Psoas muscle (tissue), 8 donors: ENCODE measurements at regions of chr16 and their contacts with region 1.

Region 1: DNA sequence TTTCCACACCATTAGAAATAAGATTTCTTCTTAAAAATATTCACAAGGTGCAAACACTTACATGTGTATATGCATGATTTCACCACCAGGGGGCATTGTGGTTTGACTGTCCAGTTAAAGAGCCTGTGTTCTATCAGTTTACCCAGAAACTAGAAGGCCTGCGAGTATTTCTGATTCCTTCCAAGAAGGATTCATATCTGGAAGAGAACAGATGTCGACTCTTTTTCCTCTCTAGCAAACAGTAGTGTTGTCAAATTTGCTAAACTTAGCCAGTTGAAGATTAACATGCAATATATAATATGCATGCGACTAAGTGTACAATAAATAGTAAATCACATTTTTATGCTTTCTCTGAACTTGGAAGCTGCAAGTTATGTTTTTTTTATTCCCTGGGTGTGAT is 404.1 kb downstream of the WWOX start:
- DNase-seq: no peak
- ATAC-seq: peak; percentile 48 to 69 (median 54)
- H3K4me3 ChIP-seq: no peak overlapping the region
- H3K27ac ChIP-seq: no peak overlapping the region
- H3K4me1 ChIP-seq: peaks cover 23% of the 10 kb centered on the region
- H3K27me3 ChIP-seq: no peaks in the 10 kb centered on the region
- CTCF ChIP-seq: peak; percentile 96

Region 2: GRCh38 chr16:77364770-77365169 is 1138.8 kb before region 1 on chr16:
- intact Hi-C with region 1: no loop called
- DNase-seq: no peak
- ATAC-seq: no peak
- H3K4me3 ChIP-seq: no peak overlapping the region
- H3K27ac ChIP-seq: no peak overlapping the region
- H3K4me1 ChIP-seq: no peaks in the 10 kb centered on the region
- H3K27me3 ChIP-seq: no peaks in the 10 kb centered on the region
- CTCF ChIP-seq: no peak

Region 3: GRCh38 chr16:78684040-78684611 is 180.5 kb after region 1 on chr16:
- intact Hi-C with region 1: loop called in 1 of 2 experiments (anchors 2 kb)
- DNase-seq: peak; percentile 84 to 91
- ATAC-seq: peak; percentile 94 to 97 (median 96)
- H3K4me3 ChIP-seq: no peak overlapping the region
- H3K27ac ChIP-seq: peak overlapping the region; percentile 92
- H3K4me1 ChIP-seq: peaks cover 15% of the 10 kb centered on the region
- H3K27me3 ChIP-seq: no peaks in the 10 kb centered on the region
- CTCF ChIP-seq: no peak

Region 4: GRCh38 chr16:78770353-78771091 is 266.9 kb after region 1 on chr16:
- intact Hi-C with region 1: loop called (anchors 2 kb)
- DNase-seq: peak; percentile 77 to 83
- ATAC-seq: peak; percentile 75 to 89 (median 84)
- H3K4me3 ChIP-seq: no peak overlapping the region
- H3K27ac ChIP-seq: no peak overlapping the region
- H3K4me1 ChIP-seq: peaks cover 19% of the 10 kb centered on the region
- H3K27me3 ChIP-seq: no peaks in the 10 kb centered on the region
- CTCF ChIP-seq: peak; percentile 83

Region 5: DNA sequence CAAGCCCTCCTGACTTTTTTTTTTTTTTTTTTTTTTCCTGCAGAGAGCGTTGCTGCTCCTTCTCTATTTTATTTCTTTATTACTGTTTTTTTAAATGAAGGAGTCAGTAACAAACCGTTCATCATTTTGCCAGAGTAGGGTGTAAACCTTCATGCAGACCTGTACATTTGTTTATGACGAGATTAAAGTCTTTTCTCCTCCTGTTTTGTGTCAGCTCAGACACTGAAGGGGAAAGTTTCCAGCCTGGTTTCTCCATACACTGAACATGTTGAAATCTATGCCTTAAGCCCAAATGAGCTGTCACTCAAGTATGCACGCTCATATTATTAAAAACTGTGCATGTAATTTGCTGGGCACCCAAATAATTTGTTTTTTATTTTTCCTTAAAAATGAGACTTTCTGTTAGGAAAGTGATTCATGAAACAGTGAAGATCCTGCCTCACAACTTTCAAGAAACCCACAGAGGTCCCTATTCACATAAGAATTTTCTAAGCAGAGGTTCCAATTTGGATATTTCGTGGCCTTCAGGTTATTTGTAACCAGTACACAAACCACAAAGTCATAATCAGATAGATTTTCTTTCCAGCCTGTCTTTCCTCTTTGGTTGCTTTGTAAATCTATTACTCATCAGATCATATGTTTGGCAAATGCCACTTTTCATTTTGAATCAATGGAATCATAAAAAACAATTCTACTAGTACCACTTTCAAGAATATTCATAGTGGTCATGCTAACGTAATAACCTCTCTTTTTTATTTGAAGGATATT is 396.6 kb after region 1 on chr16:
- intact Hi-C with region 1: loop called in 1 of 2 experiments (anchors 10 kb)
- DNase-seq: no peak
- ATAC-seq: no peak
- H3K4me3 ChIP-seq: no peak overlapping the region
- H3K27ac ChIP-seq: no peak overlapping the region
- H3K4me1 ChIP-seq: no peaks in the 10 kb centered on the region
- H3K27me3 ChIP-seq: no peaks in the 10 kb centered on the region
- CTCF ChIP-seq: no peak

Region 6: DNA sequence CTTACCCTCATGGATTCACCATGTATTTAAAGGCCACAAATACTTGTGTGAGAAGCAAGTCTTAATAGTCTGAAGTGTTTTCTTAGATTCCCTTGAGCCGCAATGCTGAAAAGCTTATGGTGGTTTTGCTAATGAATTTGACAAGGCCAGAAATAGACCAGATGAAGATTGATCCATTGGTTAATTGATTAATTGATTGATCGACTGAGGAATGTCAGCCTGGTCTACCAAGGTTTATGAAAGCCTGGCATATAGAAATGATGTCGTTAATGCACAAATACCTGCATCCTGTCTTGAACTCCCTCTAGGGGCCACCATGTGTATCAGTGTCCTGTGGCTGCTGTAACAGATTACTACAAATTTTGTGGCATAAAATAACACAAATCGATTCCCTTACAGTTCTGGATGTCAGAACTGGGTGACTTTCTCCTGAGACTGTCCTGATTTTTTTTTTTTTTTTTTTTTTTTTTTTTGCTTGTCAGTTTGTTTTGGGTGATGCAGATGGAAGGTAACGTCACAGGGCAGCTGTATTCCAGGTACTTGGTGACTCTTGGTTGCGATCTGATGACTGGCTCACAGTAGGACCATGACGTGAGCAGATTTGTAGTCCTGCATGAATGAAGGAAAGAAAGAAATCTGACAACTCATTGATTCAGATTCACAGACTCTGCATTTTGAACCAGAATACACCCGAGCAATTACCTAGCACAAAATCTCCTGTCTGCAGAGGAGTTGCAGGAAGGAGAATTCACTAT is 543.8 kb after region 1 on chr16:
- intact Hi-C with region 1: loop called in 1 of 2 experiments (anchors 10 kb)
- DNase-seq: no peak
- ATAC-seq: no peak
- H3K4me3 ChIP-seq: no peak overlapping the region
- H3K27ac ChIP-seq: no peak overlapping the region
- H3K4me1 ChIP-seq: no peaks in the 10 kb centered on the region
- H3K27me3 ChIP-seq: peaks cover 0 to 3% (median 0%) of the 10 kb centered on the region in 3 donors
- CTCF ChIP-seq: peak; percentile 35

Region 7: GRCh38 chr16:79261481-79261940 is 757.9 kb after region 1 on chr16:
- intact Hi-C with region 1: loop called in 1 of 2 experiments (anchors 10 kb)
- DNase-seq: peak; percentile 23 to 65
- ATAC-seq: peak; percentile 56 to 72 (median 60)
- H3K4me3 ChIP-seq: no peak overlapping the region
- H3K27ac ChIP-seq: no peak overlapping the region
- H3K4me1 ChIP-seq: no peaks in the 10 kb centered on the region
- H3K27me3 ChIP-seq: no peaks in the 10 kb centered on the region
- CTCF ChIP-seq: peak; percentile 48